Motor neuron (in vitro differentiated cells): ENCODE measurements at regions of chr11 and their contacts with region 1.

Region 1: GRCh38 chr11:60607483-60607882 is 91.9 kb upstream of the MS4A8 start:
- ATAC-seq: no peak
- H3K4me3 ChIP-seq: no peak overlapping the region
- H3K27ac ChIP-seq: no peak overlapping the region
- H3K4me1 ChIP-seq: no peaks in the 10 kb centered on the region

Region 2: GRCh38 chr11:60265373-60266214 is 341.9 kb before region 1 on chr11:
- in situ Hi-C with region 1: loop called in 1 of 9 experiments (anchors 25 kb)
- ATAC-seq: peak in 7 of 8 experiments; percentile 24 to 75 (median 53)
- H3K4me3 ChIP-seq: no peak overlapping the region
- H3K27ac ChIP-seq: no peak overlapping the region
- H3K4me1 ChIP-seq: no peaks in the 10 kb centered on the region